ENCODE measurements at regions of chr5 and their contacts with region 1.

Region 1: GRCh38 chr5:178146020-178146820 is 7.5 kb downstream of the NHP2 start:
- DNase-seq: peak; percentile 88
- H3K4me3 Mint-ChIP-seq: no peak overlapping the region
- H3K27ac Mint-ChIP-seq: peak overlapping the region; percentile 86
- H3K4me1 Mint-ChIP-seq: peaks cover 18% of the 10 kb centered on the region
- H3K27me3 Mint-ChIP-seq: no peaks in the 10 kb centered on the region
- CTCF ChIP-seq: peak; percentile 94

Region 2: GRCh38 chr5:178163772-178164735 is 17.8 kb after region 1 on chr5:
- CTCF ChIA-PET with region 1: no interaction called
- intact Hi-C with region 1: loop called (anchors 1 kb)
- DNase-seq: peak; percentile 94
- H3K4me3 Mint-ChIP-seq: peak overlapping the region; percentile 8
- H3K27ac Mint-ChIP-seq: no peak overlapping the region
- H3K4me1 Mint-ChIP-seq: no peaks in the 10 kb centered on the region
- H3K27me3 Mint-ChIP-seq: peaks cover 32% of the 10 kb centered on the region
- CTCF ChIP-seq: peak; percentile 99